ENCODE measurements at regions of chr5 and their contacts with region 1.

Region 1: DNA sequence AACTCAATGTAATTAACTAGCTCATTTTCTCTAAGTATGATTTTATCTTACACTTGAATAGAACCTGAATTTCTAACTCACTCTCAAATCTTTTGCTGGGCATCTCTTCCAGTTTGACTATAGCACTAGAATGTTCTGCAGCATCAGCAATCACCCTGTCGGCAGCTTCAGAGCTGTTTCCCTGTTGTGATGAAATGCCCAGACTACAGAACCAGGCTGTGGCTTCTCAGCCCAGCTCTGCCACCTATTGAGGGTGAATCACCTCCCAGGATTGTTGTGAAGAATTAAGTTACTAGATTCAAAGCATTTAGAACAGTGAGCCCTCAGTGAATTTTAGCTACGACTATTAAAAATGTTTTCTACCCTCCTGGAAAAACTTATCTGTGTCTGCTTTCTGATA is 90.4 kb upstream of the ANKRD55 start:
- DNase-seq: peak; percentile 48 to 81
- H3K4me3 ChIP-seq: no peak overlapping the region
- H3K27ac ChIP-seq: peak overlapping the region; percentile 38; the same call in 1 of the 2 replicates
- H3K4me1 ChIP-seq: peaks cover 21% of the 10 kb centered on the region
- H3K27me3 ChIP-seq: no peaks in the 10 kb centered on the region
- CTCF ChIP-seq: no peak; the same call in 1 of the 2 replicates

Region 2: DNA sequence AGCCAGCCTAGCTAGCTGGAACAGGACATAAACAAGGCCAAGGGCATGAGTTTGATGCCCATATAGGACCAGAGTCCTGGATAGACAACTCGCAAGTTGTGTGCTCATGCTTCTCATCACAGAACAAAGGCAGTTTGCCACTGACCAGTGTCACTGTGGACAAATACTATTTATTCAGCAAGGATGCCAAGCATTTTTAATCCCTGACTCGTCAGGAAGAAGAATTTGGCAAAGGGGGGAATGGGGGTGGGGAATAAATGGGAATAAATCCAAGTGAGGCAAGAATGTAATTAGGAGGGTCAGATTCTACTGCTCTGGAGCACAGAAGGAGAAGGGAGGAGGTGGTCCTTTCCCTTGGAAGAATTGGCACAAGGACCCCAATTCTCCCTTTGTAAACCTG is 43.5 kb before region 1 on chr5:
- CTCF ChIA-PET with region 1: interaction called, 3 read pairs
- POLR2A ChIA-PET with region 1: no interaction called
- intact Hi-C with region 1: loop called (anchors 1 kb)
- DNase-seq: peak; percentile 38 to 76
- H3K4me3 ChIP-seq: no peak overlapping the region
- H3K27ac ChIP-seq: 0 out of 2 replicates have a peak overlapping the region, but pooled peaks have one; percentile 17
- H3K4me1 ChIP-seq: peaks cover 38% of the 10 kb centered on the region
- H3K27me3 ChIP-seq: no peaks in the 10 kb centered on the region
- CTCF ChIP-seq: no peak

Region 3: GRCh38 chr5:56757071-56757470 is 433.6 kb after region 1 on chr5:
- CTCF ChIA-PET with region 1: no interaction called
- POLR2A ChIA-PET with region 1: no interaction called
- intact Hi-C with region 1: no loop called
- DNase-seq: peak; percentile 94 to 95
- H3K4me3 ChIP-seq: 0 out of 2 replicates have a peak overlapping the region, but pooled peaks have one; percentile 13
- H3K27ac ChIP-seq: peak overlapping the region; percentile 65
- H3K4me1 ChIP-seq: peaks cover 48% of the 10 kb centered on the region
- H3K27me3 ChIP-seq: no peaks in the 10 kb centered on the region
- CTCF ChIP-seq: no peak